ENCODE measurements at regions of chr19 and their contacts with region 1.

Region 1: GRCh38 chr19:40055832-40056504 is at the start of gene ZNF780B:
- DNase-seq: peak; percentile 29 to 82 (median 69)
- ATAC-seq: peak; percentile 90
- H3K4me3 ChIP-seq: peak within 1 kb of the TSS; percentile 72 to 83
- H3K4me3 Mint-ChIP-seq: peak within 1 kb of the TSS; percentile 100
- H3K27ac ChIP-seq: peak within 1 kb of the TSS; percentile 78
- H3K27ac Mint-ChIP-seq: peak within 1 kb of the TSS; percentile 99
- H3K4me1 ChIP-seq: peaks cover 21% of the 10 kb centered on the region
- H3K4me1 Mint-ChIP-seq: peaks cover 58% of the 10 kb centered on the region
- H3K27me3 ChIP-seq: no peaks in the 10 kb centered on the region
- H3K27me3 Mint-ChIP-seq: peaks cover 8% of the 10 kb centered on the region
- CTCF ChIP-seq: no peak
- total RNA-seq, gene ZNF780B: 9.8 to 14.8 TPM

Region 2: GRCh38 chr19:40090241-40091204 is 34.6 kb after region 1 on chr19 and contains the start of gene ZNF780A:
- CTCF ChIA-PET with region 1: interaction called, 3 read pairs
- POLR2A ChIA-PET with region 1: interaction called, 12 read pairs
- intact Hi-C with region 1: loop called (anchors 1 to 2 kb)
- DNase-seq: peak; percentile 55 to 87 (median 79)
- ATAC-seq: peak; percentile 94
- H3K4me3 ChIP-seq: peak within 1 kb of the TSS; percentile 83 to 99
- H3K4me3 Mint-ChIP-seq: peak within 1 kb of the TSS; percentile 100
- H3K27ac ChIP-seq: peak within 1 kb of the TSS; percentile 93 to 98
- H3K27ac Mint-ChIP-seq: peak within 1 kb of the TSS; percentile 100
- H3K4me1 ChIP-seq: peaks cover 24% of the 10 kb centered on the region
- H3K4me1 Mint-ChIP-seq: peaks cover 48% of the 10 kb centered on the region
- H3K27me3 ChIP-seq: peaks cover 0 to 4% of the 10 kb centered on the region in 2 experiments
- H3K27me3 Mint-ChIP-seq: peaks cover 7% of the 10 kb centered on the region
- CTCF ChIP-seq: no peak
- total RNA-seq, gene ZNF780A: 10.6 to 11.6 TPM